ENCODE measurements at regions of chr6 and their contacts with region 1.

Region 1: GRCh38 chr6:123838505-123839234 is 35.0 kb downstream of the NKAIN2 start:
- DNase-seq: no peak
- ATAC-seq: peak; percentile 69; the same call in 1 of the 2 replicates
- H3K4me3 ChIP-seq: no peak overlapping the region
- H3K27ac ChIP-seq: no peak overlapping the region
- H3K4me1 ChIP-seq: peaks cover 3% of the 10 kb centered on the region; the same call in 1 of the 2 replicates
- H3K27me3 ChIP-seq: no peaks in the 10 kb centered on the region
- CTCF ChIP-seq: no peak

Region 2: DNA sequence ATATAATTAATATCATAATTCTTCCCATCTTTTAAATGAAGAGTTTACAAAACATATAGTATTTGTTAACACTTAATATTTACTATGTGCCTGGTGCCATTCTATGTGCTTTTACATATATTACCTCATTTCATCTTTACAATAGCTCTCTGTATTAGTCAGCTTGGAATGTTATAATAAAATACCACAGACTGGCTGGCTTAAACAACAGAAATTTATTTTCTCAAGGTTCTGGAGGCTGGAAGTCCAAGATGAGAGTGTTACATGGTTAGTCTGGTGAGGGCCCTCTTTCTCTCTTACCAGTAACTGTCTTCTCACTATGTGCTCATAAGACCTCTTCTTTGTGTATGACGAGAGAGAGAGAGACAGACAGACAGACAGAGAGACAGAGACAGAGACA is 75.2 kb after region 1 on chr6:
- CTCF ChIA-PET with region 1: interaction called, 11 read pairs
- POLR2A ChIA-PET with region 1: no interaction called
- in situ Hi-C with region 1: no loop called
- intact Hi-C with region 1: no loop called
- DNase-seq: no peak
- ATAC-seq: no peak; the same call in 1 of the 2 replicates
- H3K4me3 ChIP-seq: no peak overlapping the region
- H3K27ac ChIP-seq: 0 out of 2 replicates have a peak overlapping the region, but pooled peaks have one; percentile 10
- H3K4me1 ChIP-seq: no peaks in the 10 kb centered on the region
- H3K27me3 ChIP-seq: no peaks in the 10 kb centered on the region
- CTCF ChIP-seq: no peak

Region 3: DNA sequence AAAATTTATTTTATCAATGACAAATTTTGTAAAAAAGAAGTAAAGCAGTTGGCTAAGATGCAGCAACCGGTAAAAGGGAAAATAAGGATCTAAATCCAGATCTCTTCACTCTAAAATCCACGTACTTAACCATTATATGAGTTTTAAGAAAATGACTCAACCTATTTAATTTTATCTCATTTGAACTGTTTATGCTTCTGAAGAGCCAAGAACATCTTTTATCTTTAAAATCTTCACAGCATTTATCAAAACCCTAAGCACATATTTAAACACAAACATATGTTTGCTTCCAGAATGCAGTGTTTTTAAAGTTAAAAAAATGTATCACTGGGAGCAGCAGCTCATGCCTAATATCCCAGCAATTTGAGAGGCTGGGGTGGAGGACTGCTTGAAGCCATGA is 304.2 kb after region 1 on chr6:
- CTCF ChIA-PET with region 1: no interaction called
- POLR2A ChIA-PET with region 1: no interaction called
- in situ Hi-C with region 1: no loop called
- intact Hi-C with region 1: no loop called
- DNase-seq: no peak
- ATAC-seq: no peak
- H3K4me3 ChIP-seq: no peak overlapping the region
- H3K27ac ChIP-seq: no peak overlapping the region
- H3K4me1 ChIP-seq: peaks cover 4% of the 10 kb centered on the region; the same call in 1 of the 2 replicates
- H3K27me3 ChIP-seq: no peaks in the 10 kb centered on the region
- CTCF ChIP-seq: no peak

Measured in Panc1 (cell line).